HepG2 (cell line): ENCODE measurements at regions of chr11 and their contacts with region 1.

Region 1: DNA sequence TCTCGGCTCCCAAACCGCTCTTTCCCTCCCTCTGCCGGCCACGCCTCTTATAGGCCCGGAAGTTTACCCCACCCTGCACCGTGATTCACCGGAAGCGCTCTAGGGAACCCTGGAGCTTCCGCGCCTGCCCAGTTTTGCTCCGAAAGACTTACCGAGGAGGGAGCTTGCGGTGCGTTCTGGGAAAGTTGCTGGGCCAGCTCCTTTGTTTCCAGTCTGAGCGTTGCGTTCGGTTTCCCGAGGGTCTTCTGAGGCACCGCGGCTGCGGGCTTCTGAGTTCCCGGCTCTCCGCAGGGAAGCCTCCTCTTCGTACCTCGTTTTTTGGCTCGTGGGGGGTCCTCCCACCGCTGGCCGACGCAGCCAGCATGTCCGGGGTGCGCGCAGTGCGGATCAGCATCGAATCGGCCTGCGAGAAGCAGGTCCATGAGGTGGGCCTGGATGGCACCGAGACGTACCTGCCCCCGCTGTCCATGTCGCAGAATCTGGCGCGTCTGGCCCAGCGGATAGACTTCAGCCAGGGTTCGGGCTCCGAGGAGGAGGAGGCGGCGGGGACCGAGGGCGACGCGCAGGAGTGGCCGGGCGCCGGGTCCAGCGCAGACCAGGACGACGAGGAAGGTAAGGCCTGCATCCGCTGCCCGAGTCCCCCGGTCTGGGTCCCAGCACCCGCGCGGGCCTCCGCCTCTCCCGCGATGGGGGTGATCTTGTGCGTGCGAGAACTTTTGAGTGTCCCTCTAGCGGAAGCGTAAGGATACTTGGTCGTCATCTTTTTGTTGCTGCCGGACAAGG is at the start of gene MED17:
- DNase-seq: peak; percentile 89
- ATAC-seq: peak; percentile 99
- H3K4me3 ChIP-seq: peak within 1 kb of the TSS; percentile 85 to 93 (median 93)
- H3K27ac ChIP-seq: peak within 1 kb of the TSS; percentile 90
- H3K4me1 ChIP-seq: peaks cover 32% of the 10 kb centered on the region
- H3K27me3 ChIP-seq: no peaks in the 10 kb centered on the region; a peak in 1 of 5 replicates
- CTCF ChIP-seq: peak; percentile 59
- EP300 ChIP-seq: no peak
- POLR2A ChIP-seq: peak; percentile 82 to 95
- RAD21 ChIP-seq: peak; percentile 45; the same call in 1 of the 2 replicates
- total RNA-seq, gene MED17: 31.3 and 37.0 TPM in 2 replicates

Region 2: DNA sequence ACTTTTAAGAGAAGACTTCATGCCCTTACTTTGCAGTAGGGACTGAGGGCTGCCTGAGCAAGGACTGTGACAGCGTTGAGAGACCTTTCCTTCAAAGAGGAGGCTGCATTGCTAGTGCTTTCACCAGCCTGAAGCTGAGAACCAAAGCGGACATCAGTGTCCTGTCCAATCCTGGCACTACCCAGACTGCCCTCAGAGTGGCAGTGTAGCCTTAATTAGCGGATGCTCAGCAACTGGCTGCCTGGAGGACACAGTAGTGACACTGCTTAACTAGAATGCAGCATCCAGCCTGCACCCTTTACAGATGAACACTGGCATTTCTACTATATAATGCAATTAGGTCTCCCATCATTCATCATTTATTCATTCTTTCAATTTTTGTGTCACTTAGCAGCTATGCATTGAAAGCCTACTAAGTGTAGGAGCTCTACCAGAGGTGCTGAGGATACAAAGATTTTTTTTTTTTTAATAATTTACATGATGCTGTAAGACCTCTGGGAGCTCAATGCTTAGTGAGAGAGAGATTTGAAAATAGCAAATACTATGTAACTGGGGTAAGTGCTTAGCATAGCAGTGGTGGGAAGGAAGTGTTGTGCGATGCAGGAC is 549.6 kb before region 1 on chr11:
- CTCF ChIA-PET with region 1: no interaction called
- POLR2A ChIA-PET with region 1: no interaction called
- in situ Hi-C with region 1: no loop called
- intact Hi-C with region 1: loop called (anchors 5 kb)
- DNase-seq: peak; percentile 61
- ATAC-seq: peak; percentile 99
- H3K4me3 ChIP-seq: no peak overlapping the region
- H3K27ac ChIP-seq: no peak overlapping the region
- H3K4me1 ChIP-seq: no peaks in the 10 kb centered on the region
- H3K27me3 ChIP-seq: no peaks in the 10 kb centered on the region
- CTCF ChIP-seq: peak; percentile 95
- EP300 ChIP-seq: no peak
- POLR2A ChIP-seq: no peak
- RAD21 ChIP-seq: peak; percentile 88

Region 3: DNA sequence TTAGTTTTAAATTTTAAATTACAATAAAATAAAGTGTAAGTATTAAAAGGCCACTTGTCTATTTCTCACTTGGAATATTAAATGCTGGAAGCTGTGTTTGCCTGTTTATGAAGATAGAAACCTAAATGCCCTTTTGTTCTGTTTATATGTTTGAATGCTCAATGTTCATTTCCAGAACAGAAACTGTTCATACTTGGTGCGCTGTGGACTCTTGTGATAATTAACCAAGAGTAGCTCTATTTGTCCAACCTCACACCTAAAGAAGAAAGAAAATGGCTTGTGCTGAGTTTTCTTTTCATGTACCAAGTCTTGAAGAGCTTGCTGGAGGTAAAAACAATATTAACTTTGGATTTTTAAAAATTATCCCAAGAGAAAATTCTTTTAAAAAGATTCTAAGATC is 37.2 kb before region 1 on chr11:
- CTCF ChIA-PET with region 1: no interaction called
- POLR2A ChIA-PET with region 1: interaction called, 114 read pairs
- in situ Hi-C with region 1: loop called (anchors 5 kb)
- intact Hi-C with region 1: loop called (anchors 1 kb)
- DNase-seq: no peak
- ATAC-seq: peak; percentile 20; the same call in 2 of the 3 replicates
- H3K4me3 ChIP-seq: peak overlapping the region in 1 of 3 experiments; percentile 28; a peak in 1 of 6 replicates
- H3K27ac ChIP-seq: peak overlapping the region; percentile 54
- H3K4me1 ChIP-seq: peaks cover 63% of the 10 kb centered on the region
- H3K27me3 ChIP-seq: no peaks in the 10 kb centered on the region
- CTCF ChIP-seq: no peak
- EP300 ChIP-seq: no peak
- POLR2A ChIP-seq: no peak
- RAD21 ChIP-seq: no peak

Region 4: DNA sequence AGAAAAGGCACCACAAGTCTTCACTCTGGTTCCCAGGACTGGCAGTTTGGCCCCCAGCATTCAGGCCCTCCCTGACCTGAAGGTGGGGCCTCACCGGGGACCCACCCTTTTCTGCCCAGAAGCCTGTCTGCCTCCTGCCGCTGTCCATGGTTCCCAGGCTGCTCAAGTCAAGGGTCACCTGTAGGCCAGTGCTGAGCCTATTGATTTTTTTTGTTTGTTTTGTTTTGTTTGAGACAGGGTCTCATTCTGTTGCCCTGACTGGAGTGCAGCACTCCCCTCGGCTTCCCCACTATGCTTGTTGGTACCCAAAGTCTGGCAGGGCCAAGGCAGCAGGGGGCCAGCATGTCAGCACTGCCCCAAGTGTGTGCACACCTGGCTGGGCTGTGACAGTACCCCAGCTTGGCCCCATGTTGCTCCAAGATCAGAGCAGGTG is 11.3 kb before region 1 on chr11:
- CTCF ChIA-PET with region 1: no interaction called
- POLR2A ChIA-PET with region 1: interaction called, 15 read pairs
- in situ Hi-C with region 1: no loop called
- intact Hi-C with region 1: no loop called
- DNase-seq: peak; percentile 69
- ATAC-seq: peak; percentile 95
- H3K4me3 ChIP-seq: no peak overlapping the region; a peak in 1 of 6 replicates
- H3K27ac ChIP-seq: no peak overlapping the region
- H3K4me1 ChIP-seq: peaks cover 30% of the 10 kb centered on the region
- H3K27me3 ChIP-seq: no peaks in the 10 kb centered on the region
- CTCF ChIP-seq: no peak
- EP300 ChIP-seq: peak in 1 of 2 experiments; percentile 11; a peak in 1 of 4 replicates
- POLR2A ChIP-seq: no peak
- RAD21 ChIP-seq: no peak; the same call in 1 of the 2 replicates

Region 5: GRCh38 chr11:93958991-93959390 is 174.6 kb after region 1 on chr11:
- CTCF ChIA-PET with region 1: no interaction called
- POLR2A ChIA-PET with region 1: no interaction called
- in situ Hi-C with region 1: no loop called
- intact Hi-C with region 1: no loop called
- DNase-seq: no peak
- ATAC-seq: no peak
- H3K4me3 ChIP-seq: no peak overlapping the region
- H3K27ac ChIP-seq: no peak overlapping the region
- H3K4me1 ChIP-seq: no peaks in the 10 kb centered on the region
- H3K27me3 ChIP-seq: peaks cover 0 to 3% of the 10 kb centered on the region in 2 experiments; a peak in 1 of 5 replicates
- CTCF ChIP-seq: no peak
- EP300 ChIP-seq: no peak
- POLR2A ChIP-seq: no peak
- RAD21 ChIP-seq: no peak